ENCODE measurements at regions of chr12 and their contacts with region 1.

Region 1: GRCh38 chr12:52667511-52667910 is 12.7 kb downstream of the KRT1 start:
- DNase-seq: no peak
- ATAC-seq: no peak
- H3K4me3 ChIP-seq: no peak overlapping the region
- H3K27ac ChIP-seq: no peak overlapping the region
- H3K4me1 ChIP-seq: no peaks in the 10 kb centered on the region
- H3K27me3 ChIP-seq: peaks cover 13% of the 10 kb centered on the region
- CTCF ChIP-seq: peak; percentile 17; the same call in 1 of the 2 replicates
- POLR2A ChIP-seq: no peak
- RAD21 ChIP-seq: peak; percentile 23; the same call in 1 of the 2 replicates

Region 2: GRCh38 chr12:52715416-52715815 is 47.9 kb after region 1 on chr12:
- CTCF ChIA-PET with region 1: no interaction called
- POLR2A ChIA-PET with region 1: no interaction called
- dilution Hi-C with region 1: no loop called
- in situ Hi-C with region 1: loop called (anchors 5 kb)
- intact Hi-C with region 1: no loop called
- DNase-seq: no peak
- ATAC-seq: no peak
- H3K4me3 ChIP-seq: no peak overlapping the region
- H3K27ac ChIP-seq: no peak overlapping the region
- H3K4me1 ChIP-seq: no peaks in the 10 kb centered on the region
- H3K27me3 ChIP-seq: peaks cover 48% of the 10 kb centered on the region
- CTCF ChIP-seq: no peak
- POLR2A ChIP-seq: no peak
- RAD21 ChIP-seq: no peak

Region 3: GRCh38 chr12:52980693-52981423 is 313.3 kb after region 1 on chr12:
- CTCF ChIA-PET with region 1: no interaction called
- POLR2A ChIA-PET with region 1: no interaction called
- dilution Hi-C with region 1: no loop called
- in situ Hi-C with region 1: no loop called
- intact Hi-C with region 1: no loop called
- DNase-seq: peak; percentile 88
- ATAC-seq: peak; percentile 83
- H3K4me3 ChIP-seq: no peak overlapping the region
- H3K27ac ChIP-seq: no peak overlapping the region
- H3K4me1 ChIP-seq: peaks cover 9% of the 10 kb centered on the region
- H3K27me3 ChIP-seq: peaks cover 5% of the 10 kb centered on the region
- CTCF ChIP-seq: peak; percentile 100; the same call in 1 of the 2 replicates
- POLR2A ChIP-seq: peak; percentile 53; the same call in 1 of the 2 replicates
- RAD21 ChIP-seq: peak; percentile 100

Measured in IMR-90 (cell line).